ENCODE measurements at regions of chr5 and their contacts with region 1.

Region 1: DNA sequence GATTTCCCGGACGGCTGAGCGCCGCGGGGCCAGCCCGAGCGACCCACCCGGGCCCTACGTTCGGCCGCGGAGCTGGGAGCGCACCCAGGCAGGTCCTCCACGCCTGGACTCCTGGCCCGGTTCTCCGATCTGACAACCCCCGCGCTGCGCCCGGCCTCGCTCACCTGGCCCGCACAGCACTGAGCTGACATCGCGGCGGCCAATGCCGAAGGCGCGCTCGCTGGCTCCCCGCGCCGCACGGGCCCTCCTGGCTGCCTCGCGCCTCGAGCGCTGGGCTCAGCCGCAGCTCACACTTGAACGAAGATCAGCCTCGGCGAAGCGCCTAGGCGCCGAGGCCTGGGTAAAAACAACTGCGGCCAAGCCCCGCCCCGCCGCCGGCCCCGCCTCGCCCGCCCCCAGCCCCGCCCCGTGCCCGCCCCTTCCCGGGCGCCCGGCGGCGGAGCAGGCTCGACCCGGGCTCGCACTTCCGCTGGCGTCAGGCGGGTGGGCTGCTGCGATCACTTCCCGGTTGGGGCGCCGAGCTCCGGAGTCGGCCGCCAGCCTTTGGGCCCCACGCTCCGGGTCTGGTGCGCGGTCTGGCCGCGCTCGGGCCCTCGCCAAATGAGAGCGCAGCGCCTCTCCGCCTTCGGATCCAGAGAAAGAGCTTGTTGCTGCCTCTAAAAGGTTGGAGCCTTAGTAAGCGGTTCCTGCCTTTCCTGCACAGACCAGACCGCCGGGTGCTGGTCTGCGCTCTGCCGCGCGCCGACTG is at the start of gene SERINC5:
- DNase-seq: peak; percentile 87 to 92
- ATAC-seq: peak; percentile 87 to 94 (median 89)
- H3K4me3 ChIP-seq: peak within 1 kb of the TSS; percentile 94
- H3K27ac ChIP-seq: peak within 1 kb of the TSS; percentile 95
- H3K4me1 ChIP-seq: peaks cover 12% of the 10 kb centered on the region
- H3K27me3 ChIP-seq: no peaks in the 10 kb centered on the region
- CTCF ChIP-seq: no peak
- total RNA-seq, gene SERINC5: 2.7 to 8.6 (median 4.3) TPM

Region 2: DNA sequence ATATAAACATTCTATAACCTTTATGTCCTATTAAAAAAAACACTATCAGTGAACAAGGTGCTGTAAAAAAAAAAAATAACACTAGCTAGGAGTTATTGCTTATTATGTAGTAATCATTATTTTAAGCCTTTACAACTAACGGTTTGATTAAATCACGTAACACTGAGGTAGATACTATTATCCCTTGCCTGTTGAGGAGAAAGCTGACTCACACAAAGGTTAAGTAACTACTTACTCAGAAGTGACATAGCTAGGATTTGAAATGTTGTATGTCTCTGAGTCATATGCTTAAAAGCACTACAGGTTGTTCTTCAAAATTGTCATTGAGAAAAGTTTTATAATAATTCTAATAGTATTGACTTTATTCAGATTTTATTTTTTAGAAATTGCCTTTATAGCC is 634.9 kb before region 1 on chr5:
- intact Hi-C with region 1: no loop called
- DNase-seq: no peak
- ATAC-seq: peak; percentile 92 to 98 (median 96)
- H3K4me3 ChIP-seq: no peak overlapping the region
- H3K27ac ChIP-seq: peak overlapping the region; percentile 63
- H3K4me1 ChIP-seq: peaks cover 16% of the 10 kb centered on the region
- H3K27me3 ChIP-seq: no peaks in the 10 kb centered on the region
- CTCF ChIP-seq: no peak

Region 3: DNA sequence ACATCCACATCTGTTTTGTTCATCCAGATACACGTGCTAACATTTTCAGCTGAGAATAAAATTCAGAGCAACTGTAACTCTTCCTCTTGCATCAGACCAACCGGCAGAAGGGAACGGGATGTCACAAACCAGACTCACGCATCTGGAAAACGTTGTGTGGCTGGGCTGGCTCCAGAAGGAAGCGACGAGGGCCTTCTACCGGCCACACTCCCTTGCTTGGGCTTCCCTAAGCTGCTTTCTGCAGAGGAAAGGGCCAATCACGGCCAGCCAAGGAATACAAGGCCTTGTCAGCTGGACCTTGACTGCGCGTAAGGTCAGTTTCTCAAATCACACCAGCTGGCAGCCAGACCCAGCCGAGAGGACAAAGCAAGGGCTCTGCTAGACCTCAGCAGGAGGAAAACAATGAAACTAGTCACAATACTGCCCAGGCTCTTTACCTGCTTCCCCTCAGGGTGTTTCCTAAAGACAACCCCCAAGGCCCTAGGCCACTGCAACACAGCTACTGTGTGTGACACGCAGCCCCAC is 114.7 kb before region 1 on chr5:
- intact Hi-C with region 1: loop called (anchors 2 to 5 kb)
- DNase-seq: peak; percentile 85 to 94
- ATAC-seq: peak; percentile 92 to 97 (median 94)
- H3K4me3 ChIP-seq: no peak overlapping the region
- H3K27ac ChIP-seq: peak overlapping the region; percentile 80
- H3K4me1 ChIP-seq: peaks cover 24% of the 10 kb centered on the region
- H3K27me3 ChIP-seq: no peaks in the 10 kb centered on the region
- CTCF ChIP-seq: no peak

Region 4: DNA sequence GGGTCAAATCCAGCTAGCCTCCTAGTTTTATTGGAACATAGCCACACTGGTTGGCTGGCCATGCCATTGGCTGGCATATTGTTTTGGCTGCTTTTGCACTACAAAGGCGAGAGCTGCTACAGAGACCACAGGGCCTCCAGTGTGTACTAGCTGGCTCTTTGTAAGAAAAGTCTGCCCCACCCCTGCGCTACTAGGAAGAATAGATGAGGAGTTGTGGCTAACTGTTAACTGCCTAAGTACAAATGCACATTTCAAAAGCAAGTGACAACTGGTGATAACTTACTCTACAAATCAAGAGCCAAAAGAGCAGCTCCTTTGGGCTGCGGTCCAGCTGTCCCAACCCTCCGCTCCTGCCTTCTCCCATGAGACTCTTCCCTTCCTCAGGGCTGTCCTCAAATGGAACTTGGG is 63.9 kb before region 1 on chr5:
- intact Hi-C with region 1: loop called (anchors 10 kb)
- DNase-seq: peak; percentile 35 to 62
- ATAC-seq: peak; percentile 49 to 67 (median 54)
- H3K4me3 ChIP-seq: peak overlapping the region; percentile 9
- H3K27ac ChIP-seq: peak overlapping the region; percentile 58
- H3K4me1 ChIP-seq: peaks cover 38% of the 10 kb centered on the region
- H3K27me3 ChIP-seq: no peaks in the 10 kb centered on the region
- CTCF ChIP-seq: no peak

Region 5: DNA sequence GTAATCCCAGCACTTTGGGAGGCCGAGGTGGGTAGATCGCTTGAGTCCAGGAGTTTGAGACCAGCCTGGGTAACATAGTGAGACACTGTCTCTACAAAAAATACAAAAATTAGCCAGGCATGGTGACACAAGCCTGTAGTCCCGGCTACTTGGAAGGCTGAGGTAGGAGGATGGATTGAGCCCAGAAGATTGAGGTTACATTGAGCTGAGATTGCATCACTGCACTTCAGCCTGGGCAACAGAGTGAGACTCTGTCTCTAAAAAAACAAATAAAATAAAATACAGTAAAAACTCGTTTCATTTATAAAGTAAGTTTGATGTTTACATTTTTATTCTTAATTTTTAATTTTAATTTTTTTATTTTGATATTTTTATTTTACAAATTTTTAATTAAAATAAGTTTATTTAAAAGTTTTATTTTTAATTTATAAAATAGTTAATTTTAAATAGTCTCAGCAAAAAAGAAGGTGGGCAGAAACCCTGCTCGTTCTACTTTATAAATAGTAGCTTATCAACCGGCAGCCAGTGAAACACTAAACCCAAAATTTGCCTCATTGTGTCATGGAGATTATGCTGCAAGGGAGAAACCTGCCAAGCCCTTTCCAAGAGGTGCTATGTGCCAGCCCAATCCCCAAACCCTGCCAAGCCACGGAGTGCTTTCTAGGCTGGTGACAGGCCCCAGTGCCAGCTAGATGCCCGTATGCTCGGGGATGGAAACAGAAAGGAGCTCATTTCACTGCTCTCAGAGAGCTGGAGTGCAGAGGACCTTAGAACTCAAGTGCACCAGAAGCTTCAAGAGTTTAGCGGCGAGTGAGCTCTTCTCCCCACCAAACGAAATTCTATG is 38.9 kb before region 1 on chr5:
- intact Hi-C with region 1: loop called (anchors 5 kb)
- DNase-seq: peak; percentile 71 to 91
- ATAC-seq: peak; percentile 98 to 99 (median 99)
- H3K4me3 ChIP-seq: peak overlapping the region; percentile 1
- H3K27ac ChIP-seq: peak overlapping the region; percentile 0
- H3K4me1 ChIP-seq: peaks cover 20% of the 10 kb centered on the region
- H3K27me3 ChIP-seq: no peaks in the 10 kb centered on the region
- CTCF ChIP-seq: no peak

Region 6: GRCh38 chr5:80318212-80318611 is 62.3 kb after region 1 on chr5:
- intact Hi-C with region 1: no loop called
- DNase-seq: no peak
- ATAC-seq: no peak
- H3K4me3 ChIP-seq: no peak overlapping the region
- H3K27ac ChIP-seq: no peak overlapping the region
- H3K4me1 ChIP-seq: no peaks in the 10 kb centered on the region
- H3K27me3 ChIP-seq: no peaks in the 10 kb centered on the region
- CTCF ChIP-seq: no peak

Region 7: GRCh38 chr5:80382488-80382887 is 126.6 kb after region 1 on chr5:
- intact Hi-C with region 1: no loop called
- DNase-seq: no peak
- ATAC-seq: no peak
- H3K4me3 ChIP-seq: no peak overlapping the region
- H3K27ac ChIP-seq: no peak overlapping the region
- H3K4me1 ChIP-seq: no peaks in the 10 kb centered on the region
- H3K27me3 ChIP-seq: no peaks in the 10 kb centered on the region
- CTCF ChIP-seq: no peak

Region 8: GRCh38 chr5:80407735-80408482 is 152.0 kb after region 1 on chr5 and contains the start of gene ZFYVE16:
- intact Hi-C with region 1: loop called in 1 of 2 experiments (anchors 10 kb)
- DNase-seq: peak; percentile 99
- ATAC-seq: peak; percentile 96 to 97 (median 97)
- H3K4me3 ChIP-seq: peak within 1 kb of the TSS; percentile 94
- H3K27ac ChIP-seq: peak within 1 kb of the TSS; percentile 99
- H3K4me1 ChIP-seq: peaks cover 19% of the 10 kb centered on the region
- H3K27me3 ChIP-seq: no peaks in the 10 kb centered on the region
- CTCF ChIP-seq: peak; percentile 44
- total RNA-seq, gene ZFYVE16: 21.8 to 36.7 (median 27.3) TPM